Breast epithelium (tissue), 4 donors: ENCODE measurements at regions of chr20 and their contacts with region 1.

Region 1: DNA sequence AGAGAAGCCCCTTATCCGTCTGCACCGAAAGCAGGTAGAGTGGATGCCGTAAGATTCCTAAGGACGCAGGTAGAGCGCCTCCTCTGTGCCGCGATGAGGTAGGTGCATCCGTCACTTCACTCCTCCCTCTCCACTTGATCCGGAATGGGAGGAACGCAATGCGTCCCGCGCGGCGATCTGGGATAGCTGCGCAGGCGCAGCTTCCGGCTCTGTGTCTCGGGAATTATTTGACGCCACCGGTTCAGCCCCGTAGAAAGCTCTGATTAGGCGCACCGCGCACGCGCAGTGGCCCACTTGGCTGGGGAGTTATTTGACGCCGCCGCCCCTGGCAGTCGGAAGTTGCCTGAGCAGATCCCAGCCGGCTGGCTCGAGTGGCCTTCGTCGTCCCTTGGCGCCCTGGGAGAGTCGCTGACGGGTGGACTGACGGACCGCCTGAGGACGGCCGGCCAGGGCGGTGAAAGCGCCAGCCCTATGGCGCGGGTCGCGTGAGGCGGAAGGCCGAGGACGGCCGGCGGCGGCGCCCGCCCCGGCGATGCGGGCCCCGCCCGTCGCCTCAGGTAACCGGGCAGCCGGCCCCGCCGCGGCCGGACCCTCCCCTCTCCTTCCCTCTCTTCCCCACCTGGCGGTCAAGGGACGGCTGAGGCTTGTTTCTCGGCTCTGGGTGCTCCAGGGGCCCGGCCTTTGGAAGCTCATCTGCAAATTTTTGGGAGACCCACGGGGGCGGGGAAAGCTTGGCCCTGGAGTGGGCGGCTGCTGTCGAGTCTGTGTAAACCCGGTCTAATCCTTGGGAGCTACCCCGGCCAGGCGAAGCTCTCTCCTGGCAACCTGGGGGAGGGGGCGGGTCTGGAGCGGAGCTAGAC is at the start of gene RALGAPB:
- DNase-seq: peak; percentile 99
- H3K4me3 ChIP-seq: peak within 1 kb of the TSS; percentile 69 to 93 (median 76)
- H3K27ac ChIP-seq: peak within 1 kb of the TSS; percentile 93 to 95
- H3K4me1 ChIP-seq: peaks cover 2 to 14% of the 10 kb centered on the region in 2 donors
- H3K27me3 ChIP-seq: no peaks in the 10 kb centered on the region
- CTCF ChIP-seq: peak; percentile 18 to 49 (median 27)
- POLR2A ChIP-seq: peak; percentile 56
- total RNA-seq, gene RALGAPB: 32.8 to 73.6 (median 58.0) TPM

Region 2: DNA sequence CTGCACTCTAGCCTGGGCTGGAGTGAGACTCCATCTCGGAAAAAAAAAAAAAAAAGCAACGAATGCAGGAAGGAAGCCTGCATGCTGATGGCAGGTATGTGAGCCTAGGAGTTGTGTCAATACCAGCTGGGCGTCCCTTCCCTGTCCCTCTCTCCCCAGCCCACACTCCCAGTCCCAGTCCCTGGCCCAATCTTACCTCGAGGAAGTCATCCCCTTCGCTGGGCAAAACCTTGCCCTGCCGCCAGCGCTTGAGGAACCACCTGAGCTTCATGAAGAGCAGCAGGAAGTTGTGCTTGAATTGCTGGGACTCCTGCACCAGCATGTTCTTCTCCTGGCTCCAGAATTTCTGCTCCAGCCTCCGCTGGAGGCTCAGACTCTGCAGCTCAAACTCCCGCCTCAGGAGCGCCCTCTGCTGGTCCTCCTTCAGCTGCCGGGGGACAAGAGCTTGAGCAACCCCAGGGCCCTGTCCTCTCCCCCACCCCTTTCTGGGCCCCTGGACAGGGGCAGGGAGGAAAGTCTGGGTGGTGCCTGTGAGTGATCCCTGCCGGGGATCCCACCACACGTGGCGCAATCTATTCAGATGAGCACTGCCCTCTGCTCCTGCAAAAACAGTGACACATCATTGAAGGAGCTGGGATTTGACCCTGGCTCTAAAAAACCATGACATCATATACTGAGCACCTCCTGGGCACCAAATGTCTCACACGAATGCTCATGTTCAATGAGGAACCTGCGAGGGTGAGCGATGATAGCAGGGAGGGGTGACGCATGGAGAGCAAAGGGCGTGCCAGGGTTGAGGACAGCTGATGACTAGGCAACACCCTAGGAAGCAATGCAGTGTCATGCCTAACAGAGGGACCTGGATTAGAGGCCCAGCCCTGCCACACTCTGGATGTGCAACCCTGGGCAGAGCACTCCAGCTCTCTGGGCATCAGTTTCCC is 1664.2 kb before region 1 on chr20:
- intact Hi-C with region 1: no loop called
- DNase-seq: no peak
- H3K4me3 ChIP-seq: no peak overlapping the region
- H3K27ac ChIP-seq: no peak overlapping the region
- H3K4me1 ChIP-seq: no peaks in the 10 kb centered on the region
- H3K27me3 ChIP-seq: no peaks in the 10 kb centered on the region
- CTCF ChIP-seq: peak in 2 of 3 donors; percentile 23 to 34
- POLR2A ChIP-seq: no peak

Region 3: GRCh38 chr20:37822141-37822601 is 650.6 kb before region 1 on chr20:
- intact Hi-C with region 1: no loop called
- DNase-seq: peak in 1 of 2 donors; percentile 41
- H3K4me3 ChIP-seq: no peak overlapping the region
- H3K27ac ChIP-seq: no peak overlapping the region
- H3K4me1 ChIP-seq: no peaks in the 10 kb centered on the region
- H3K27me3 ChIP-seq: no peaks in the 10 kb centered on the region
- CTCF ChIP-seq: no peak
- POLR2A ChIP-seq: no peak

Region 4: DNA sequence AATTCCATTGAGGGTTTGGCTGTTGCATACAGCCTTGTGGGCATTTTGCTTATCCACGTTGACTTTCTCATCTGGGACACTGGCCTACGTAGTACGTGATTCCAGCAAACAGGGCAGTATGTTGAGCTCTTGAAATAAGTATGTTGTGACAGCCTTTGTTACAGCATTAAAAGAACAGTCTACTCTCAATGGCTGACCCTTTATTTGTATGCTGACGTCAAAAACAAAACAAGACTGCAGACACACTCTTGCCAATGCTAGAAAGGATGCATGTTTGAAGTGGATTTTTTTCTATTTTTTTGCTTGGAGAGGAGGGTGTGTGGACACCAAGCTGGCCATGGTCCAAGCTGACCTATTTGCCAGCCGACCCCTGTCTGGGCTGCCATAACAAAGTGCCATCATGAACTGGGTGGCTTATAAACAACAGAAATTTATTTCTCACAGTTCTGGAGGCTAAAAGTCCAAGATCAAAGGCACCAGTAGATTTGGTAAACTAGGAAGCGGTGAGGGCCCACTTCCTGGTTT is 26.8 kb before region 1 on chr20:
- intact Hi-C with region 1: loop called (anchors 2 kb)
- DNase-seq: no peak
- H3K4me3 ChIP-seq: peak overlapping the region; percentile 80 to 94 (median 89)
- H3K27ac ChIP-seq: peak overlapping the region; percentile 89
- H3K4me1 ChIP-seq: peaks cover 0 to 6% of the 10 kb centered on the region in 2 donors
- H3K27me3 ChIP-seq: no peaks in the 10 kb centered on the region
- CTCF ChIP-seq: no peak
- POLR2A ChIP-seq: no peak

Region 5: GRCh38 chr20:39839399-39840119 is 1366.8 kb after region 1 on chr20:
- intact Hi-C with region 1: no loop called
- DNase-seq: no peak
- H3K4me3 ChIP-seq: no peak overlapping the region
- H3K27ac ChIP-seq: no peak overlapping the region
- H3K4me1 ChIP-seq: no peaks in the 10 kb centered on the region
- H3K27me3 ChIP-seq: no peaks in the 10 kb centered on the region
- CTCF ChIP-seq: no peak
- POLR2A ChIP-seq: no peak